ENCODE measurements at regions of chr1 and their contacts with region 1.

Region 1: DNA sequence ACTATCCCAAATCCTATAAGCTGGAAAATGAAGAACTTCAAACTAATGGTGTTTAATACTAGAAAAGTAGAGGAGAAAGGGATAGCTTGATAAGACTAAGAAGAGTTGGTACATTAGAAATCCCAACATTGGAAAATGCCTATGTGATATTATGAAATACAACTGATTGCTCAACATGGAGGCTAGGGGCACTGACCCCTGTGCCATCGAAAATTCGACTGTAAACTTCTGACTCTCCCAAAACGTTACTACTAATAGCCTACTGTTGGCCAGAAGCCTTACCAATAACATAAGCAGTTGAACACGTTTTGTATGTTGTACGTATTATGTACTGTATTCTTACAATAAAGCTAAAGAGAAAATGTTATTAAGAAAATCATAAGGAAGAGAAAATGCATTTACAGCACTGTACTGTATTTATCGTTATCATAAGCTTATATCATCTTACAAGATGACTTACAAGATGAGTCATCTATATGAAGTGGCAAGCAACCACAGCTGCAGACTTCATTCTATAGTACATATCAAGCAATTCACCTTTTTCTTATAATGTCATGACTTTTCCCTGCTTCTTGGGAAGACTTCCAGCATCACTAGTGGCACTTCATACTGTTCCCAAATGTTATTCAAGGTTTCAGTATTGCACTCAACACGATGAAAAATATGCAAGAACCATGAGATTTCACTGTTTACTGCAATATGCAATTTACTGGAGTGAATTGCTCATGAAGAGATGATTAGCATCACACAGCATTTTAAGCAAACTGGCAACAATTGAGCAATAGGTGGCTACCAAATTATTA is 12.9 kb upstream of the CTSK start:
- DNase-seq: no peak
- ATAC-seq: no peak
- H3K4me3 Mint-ChIP-seq: no peak overlapping the region
- H3K27ac Mint-ChIP-seq: no peak overlapping the region
- H3K4me1 Mint-ChIP-seq: no peaks in the 10 kb centered on the region
- H3K27me3 Mint-ChIP-seq: no peaks in the 10 kb centered on the region
- CTCF ChIP-seq: no peak

Region 2: DNA sequence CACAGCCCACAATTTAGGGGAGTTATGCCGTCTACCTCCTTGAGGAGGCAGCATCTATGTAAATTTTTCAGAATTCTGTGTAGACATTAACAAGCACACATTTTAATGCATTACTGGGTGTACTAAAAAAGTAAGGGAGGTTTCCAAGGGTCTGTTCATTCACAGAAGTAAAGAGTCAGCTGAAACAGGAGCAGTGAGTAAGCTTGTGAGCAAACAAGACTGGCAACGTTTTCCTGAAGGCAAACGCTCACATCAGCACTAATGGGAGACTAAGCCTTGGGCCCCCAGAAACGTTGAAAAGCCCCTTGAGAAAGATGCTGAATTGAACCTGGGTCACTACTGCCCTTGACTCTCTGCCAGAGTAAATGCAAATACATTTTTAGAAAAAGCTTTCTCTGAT is 431.3 kb before region 1 on chr1:
- CTCF ChIA-PET with region 1: no interaction called
- POLR2A ChIA-PET with region 1: no interaction called
- intact Hi-C with region 1: no loop called
- DNase-seq: no peak
- ATAC-seq: no peak
- H3K4me3 Mint-ChIP-seq: no peak overlapping the region
- H3K27ac Mint-ChIP-seq: no peak overlapping the region
- H3K4me1 Mint-ChIP-seq: peaks cover 39% of the 10 kb centered on the region
- H3K27me3 Mint-ChIP-seq: no peaks in the 10 kb centered on the region
- CTCF ChIP-seq: no peak

Region 3: GRCh38 chr1:150748878-150749719 is 71.8 kb before region 1 on chr1:
- CTCF ChIA-PET with region 1: no interaction called
- POLR2A ChIA-PET with region 1: interaction called, 14 read pairs
- intact Hi-C with region 1: no loop called
- DNase-seq: no peak
- ATAC-seq: no peak
- H3K4me3 Mint-ChIP-seq: no peak overlapping the region
- H3K27ac Mint-ChIP-seq: no peak overlapping the region
- H3K4me1 Mint-ChIP-seq: no peaks in the 10 kb centered on the region
- H3K27me3 Mint-ChIP-seq: no peaks in the 10 kb centered on the region
- CTCF ChIP-seq: no peak